ENCODE measurements at regions of chr1 and their contacts with region 1.

Region 1: GRCh38 chr1:218361298-218362065 is 16.3 kb downstream of the TGFB2 start:
- DNase-seq: no peak
- ATAC-seq: peak; percentile 32
- H3K4me3 ChIP-seq: no peak overlapping the region
- H3K27ac ChIP-seq: peak overlapping the region in 1 of 2 donors; percentile 58
- H3K4me1 ChIP-seq: peaks cover 5 to 6% of the 10 kb centered on the region in 2 donors
- H3K27me3 ChIP-seq: no peaks in the 10 kb centered on the region

Region 2: GRCh38 chr1:218401998-218402785 is 40.7 kb after region 1 on chr1:
- intact Hi-C with region 1: no loop called
- DNase-seq: no peak
- ATAC-seq: no peak
- H3K4me3 ChIP-seq: no peak overlapping the region
- H3K27ac ChIP-seq: no peak overlapping the region
- H3K4me1 ChIP-seq: no peaks in the 10 kb centered on the region
- H3K27me3 ChIP-seq: no peaks in the 10 kb centered on the region

Region 3: GRCh38 chr1:218521375-218522169 is 160.1 kb after region 1 on chr1:
- intact Hi-C with region 1: loop called in 1 of 2 experiments (anchors 5 kb)
- DNase-seq: peak in 1 of 2 donors; percentile 63
- ATAC-seq: peak; percentile 71
- H3K4me3 ChIP-seq: no peak overlapping the region
- H3K27ac ChIP-seq: no peak overlapping the region
- H3K4me1 ChIP-seq: no peaks in the 10 kb centered on the region
- H3K27me3 ChIP-seq: no peaks in the 10 kb centered on the region

Measured in aorta (tissue), 5 donors.